ENCODE measurements at regions of chr14 and their contacts with region 1.

Region 1: DNA sequence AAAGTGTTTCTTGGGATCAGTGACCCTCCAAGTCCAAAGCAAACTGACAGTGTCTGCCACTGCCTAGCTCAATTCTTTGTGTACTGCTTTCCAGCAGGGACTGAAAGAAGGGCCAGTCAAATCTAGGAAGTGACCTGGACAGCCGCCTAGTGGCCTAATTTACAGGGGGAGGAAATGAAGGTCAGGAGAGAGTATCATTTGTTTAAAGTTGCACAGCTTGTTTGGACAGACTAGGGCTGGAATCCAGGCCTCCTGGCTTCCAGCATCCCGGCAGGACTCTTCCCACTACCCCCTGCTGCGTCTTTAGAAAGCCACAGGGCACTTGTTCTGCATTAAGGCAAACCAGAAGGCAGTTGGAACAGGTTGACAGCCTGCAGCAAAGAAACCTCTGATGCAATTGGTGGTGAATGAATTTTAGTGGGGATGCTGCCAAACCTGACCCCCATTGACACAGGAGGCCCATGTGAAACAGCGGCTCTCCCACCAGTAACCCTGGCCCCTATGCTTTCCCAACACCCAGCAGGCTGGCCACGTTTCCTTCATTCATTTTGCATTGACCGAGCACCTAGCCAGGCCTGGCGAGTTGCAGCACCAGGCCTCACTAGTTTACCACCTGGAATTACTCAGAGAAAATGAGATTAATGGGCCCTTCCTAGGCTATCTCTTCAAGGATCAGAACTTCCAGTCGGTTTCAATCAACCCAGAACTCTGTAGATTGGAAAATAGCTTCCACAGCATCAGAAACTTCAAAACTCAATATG is 28.2 kb downstream of the GALNT16 start:
- DNase-seq: peak; percentile 48 to 84 (median 70)
- H3K4me3 ChIP-seq: no peak overlapping the region
- H3K27ac ChIP-seq: peak overlapping the region in 3 of 5 donors; percentile 24 to 76 (median 65)
- H3K4me1 ChIP-seq: peaks cover 5 to 28% of the 10 kb centered on the region in 2 donors
- H3K27me3 ChIP-seq: no peaks in the 10 kb centered on the region
- CTCF ChIP-seq: peak; percentile 30 to 69 (median 58)
- POLR2A ChIP-seq: no peak

Region 2: DNA sequence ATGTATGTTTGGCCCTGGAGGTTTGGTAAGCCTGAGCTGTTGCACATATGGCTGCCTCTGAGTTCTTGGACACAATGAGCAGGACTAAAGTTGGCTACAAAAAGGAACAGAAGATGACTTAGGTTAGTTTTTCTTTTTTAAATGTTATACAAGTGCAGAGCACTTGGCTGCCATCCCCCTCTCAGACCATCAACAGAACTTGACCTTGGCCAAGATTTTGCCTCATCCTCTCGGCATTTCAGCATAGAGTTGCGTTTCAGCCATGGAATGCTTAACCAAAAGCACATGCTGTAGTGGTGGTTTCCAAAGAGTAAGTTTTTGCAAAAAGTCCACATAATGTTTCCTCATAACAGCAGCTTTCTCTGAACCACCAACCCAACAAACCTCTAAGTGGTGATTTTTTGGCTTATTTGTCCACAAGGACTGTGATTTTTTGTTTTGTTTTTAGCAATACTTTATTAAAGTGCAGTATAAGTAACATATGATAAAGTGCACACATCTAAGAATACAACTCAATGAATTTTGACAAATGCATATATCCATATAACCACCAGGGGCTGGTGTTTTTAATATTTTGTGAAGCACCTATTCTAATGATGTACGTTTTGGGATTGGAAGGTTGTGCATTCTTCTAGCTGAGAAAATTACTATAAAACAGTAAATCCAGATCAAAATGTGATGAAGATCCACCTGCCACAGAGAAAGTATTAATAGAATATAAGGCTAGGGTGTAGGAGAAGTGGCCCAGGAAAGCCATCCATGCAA is 40.3 kb before region 1 on chr14:
- intact Hi-C with region 1: loop called in 1 of 2 experiments (anchors 5 kb)
- DNase-seq: peak in 6 of 7 donors; percentile 59 to 77 (median 72)
- H3K4me3 ChIP-seq: no peak overlapping the region
- H3K27ac ChIP-seq: peak overlapping the region in 2 of 5 donors; percentile 52 to 56
- H3K4me1 ChIP-seq: peaks cover 6 to 10% of the 10 kb centered on the region in 2 donors
- H3K27me3 ChIP-seq: no peaks in the 10 kb centered on the region
- CTCF ChIP-seq: peak in 4 of 6 experiments; percentile 12 to 28 (median 20)
- POLR2A ChIP-seq: no peak

Measured in adrenal gland (tissue), 19 donors.